B cell (primary cell): ENCODE measurements at regions of chr12 and their contacts with region 1.

Region 1: DNA sequence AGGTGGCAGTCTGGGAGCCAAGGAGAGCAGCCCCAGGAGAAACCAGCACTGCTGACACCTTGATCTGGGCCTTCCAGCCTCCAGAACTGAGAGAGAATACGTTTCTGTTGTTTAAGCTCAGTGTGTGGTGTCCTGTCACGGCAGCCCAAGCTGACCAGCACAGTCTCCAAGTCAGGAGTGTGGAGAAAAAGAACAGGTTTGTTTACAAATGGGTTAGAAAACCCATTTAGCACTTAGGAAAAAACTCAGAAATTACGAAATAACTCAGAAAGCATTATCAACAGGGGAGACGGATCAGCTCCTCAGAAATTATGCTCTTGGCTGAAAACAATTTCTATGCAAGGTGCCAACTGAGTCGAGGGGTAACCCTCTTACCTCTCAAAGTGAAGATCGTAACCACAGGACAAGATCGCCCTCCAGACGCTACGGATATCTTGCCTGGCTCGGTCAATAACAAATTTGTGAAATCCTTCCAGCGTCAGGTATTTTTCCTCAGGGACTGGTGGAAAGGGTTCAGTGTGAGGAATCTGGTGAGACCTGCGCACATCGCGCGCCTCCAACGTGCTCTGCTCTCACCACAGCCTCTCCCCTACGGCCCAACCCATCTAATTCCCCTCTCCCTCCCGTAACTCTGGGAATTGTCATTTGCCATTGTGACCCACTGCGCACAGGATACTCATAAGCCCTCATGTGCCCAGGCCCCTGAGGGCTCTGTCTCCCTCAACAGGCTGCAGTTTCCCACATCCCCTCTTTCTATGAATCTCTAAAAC is 50.2 kb downstream of the TRAFD1 start:
- DNase-seq: no peak
- ATAC-seq: no peak
- H3K4me3 ChIP-seq: no peak overlapping the region
- H3K4me3 Mint-ChIP-seq: no peak overlapping the region
- H3K27ac ChIP-seq: no peak overlapping the region
- H3K27ac Mint-ChIP-seq: no peak overlapping the region
- H3K4me1 ChIP-seq: no peaks in the 10 kb centered on the region
- H3K4me1 Mint-ChIP-seq: peaks cover 4% of the 10 kb centered on the region
- H3K27me3 ChIP-seq: no peaks in the 10 kb centered on the region
- H3K27me3 Mint-ChIP-seq: no peaks in the 10 kb centered on the region
- CTCF ChIP-seq: no peak

Region 2: GRCh38 chr12:112190648-112191047 is 15.1 kb after region 1 on chr12:
- CTCF ChIA-PET with region 1: no interaction called
- POLR2A ChIA-PET with region 1: no interaction called
- intact Hi-C with region 1: no loop called
- DNase-seq: no peak
- ATAC-seq: no peak
- H3K4me3 ChIP-seq: no peak overlapping the region
- H3K4me3 Mint-ChIP-seq: no peak overlapping the region
- H3K27ac ChIP-seq: no peak overlapping the region
- H3K27ac Mint-ChIP-seq: no peak overlapping the region
- H3K4me1 ChIP-seq: no peaks in the 10 kb centered on the region
- H3K4me1 Mint-ChIP-seq: no peaks in the 10 kb centered on the region
- H3K27me3 ChIP-seq: no peaks in the 10 kb centered on the region
- H3K27me3 Mint-ChIP-seq: no peaks in the 10 kb centered on the region
- CTCF ChIP-seq: no peak

Region 3: GRCh38 chr12:112239881-112240280 is 64.3 kb after region 1 on chr12:
- CTCF ChIA-PET with region 1: no interaction called
- POLR2A ChIA-PET with region 1: no interaction called
- intact Hi-C with region 1: loop called (anchors 2 kb)
- DNase-seq: peak; percentile 54
- ATAC-seq: peak; percentile 62
- H3K4me3 ChIP-seq: no peak overlapping the region
- H3K4me3 Mint-ChIP-seq: peak overlapping the region; percentile 62
- H3K27ac ChIP-seq: peak overlapping the region in 1 of 2 donors; percentile 56
- H3K27ac Mint-ChIP-seq: peak overlapping the region; percentile 76
- H3K4me1 ChIP-seq: peaks cover 6 to 11% of the 10 kb centered on the region in 2 donors
- H3K4me1 Mint-ChIP-seq: peaks cover 9% of the 10 kb centered on the region
- H3K27me3 ChIP-seq: no peaks in the 10 kb centered on the region
- H3K27me3 Mint-ChIP-seq: no peaks in the 10 kb centered on the region
- CTCF ChIP-seq: no peak